Activated CD4-positive, alpha-beta memory T cell treated with anti-CD3 and anti-CD28 coated beads for 36 hours (primary cell): ENCODE measurements at regions of chr7 and their contacts with region 1.

Region 1: GRCh38 chr7:23696916-23697441 is 13.0 kb upstream of the STK31 start:
- DNase-seq: peak; percentile 70
- H3K4me3 Mint-ChIP-seq: no peak overlapping the region
- H3K27ac Mint-ChIP-seq: no peak overlapping the region
- H3K4me1 Mint-ChIP-seq: no peaks in the 10 kb centered on the region
- H3K27me3 Mint-ChIP-seq: no peaks in the 10 kb centered on the region

Region 2: DNA sequence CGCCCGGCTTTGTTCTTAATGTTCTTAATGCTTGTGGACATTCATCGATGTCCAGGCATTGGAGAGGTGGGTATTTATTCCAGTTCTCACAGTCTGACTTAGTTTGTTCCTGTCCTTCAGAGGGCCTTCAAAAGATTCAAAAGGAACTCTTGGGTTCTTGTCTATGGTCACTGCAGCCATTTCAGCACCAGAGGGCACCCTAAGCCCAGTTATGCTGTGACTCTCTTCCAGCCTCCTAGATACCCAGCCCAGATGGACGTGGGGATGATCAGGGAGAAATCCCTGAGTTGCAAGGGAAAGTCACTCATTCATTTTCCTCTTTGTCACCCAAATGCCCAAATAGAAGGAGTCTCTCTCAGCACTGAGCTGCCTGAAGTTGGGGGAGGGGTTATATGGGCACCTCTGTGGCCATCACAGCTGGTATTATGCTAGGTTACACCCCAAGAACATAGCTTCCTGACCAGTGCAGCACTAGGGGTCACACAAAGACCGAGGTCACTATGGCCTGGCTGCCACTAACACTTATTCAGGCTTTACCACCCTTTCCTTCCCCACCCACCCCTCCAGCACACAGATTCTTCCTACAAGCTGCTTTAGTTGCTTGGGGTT is 126.3 kb before region 1 on chr7:
- CTCF ChIA-PET with region 1: interaction called, 48 read pairs
- POLR2A ChIA-PET with region 1: no interaction called
- intact Hi-C with region 1: no loop called
- DNase-seq: peak; percentile 82
- H3K4me3 Mint-ChIP-seq: no peak overlapping the region
- H3K27ac Mint-ChIP-seq: no peak overlapping the region
- H3K4me1 Mint-ChIP-seq: no peaks in the 10 kb centered on the region
- H3K27me3 Mint-ChIP-seq: peaks cover 8% of the 10 kb centered on the region

Region 3: GRCh38 chr7:23679898-23680413 is 17.0 kb before region 1 on chr7 and contains the start of gene FAM221A:
- CTCF ChIA-PET with region 1: interaction called, 18 read pairs
- POLR2A ChIA-PET with region 1: no interaction called
- intact Hi-C with region 1: no loop called
- DNase-seq: peak; percentile 90
- H3K4me3 Mint-ChIP-seq: peak within 1 kb of the TSS; percentile 84
- H3K27ac Mint-ChIP-seq: peak within 1 kb of the TSS; percentile 73
- H3K4me1 Mint-ChIP-seq: peaks cover 9% of the 10 kb centered on the region
- H3K27me3 Mint-ChIP-seq: peaks cover 5% of the 10 kb centered on the region
- total RNA-seq, gene FAM221A: 9.0 to 10.7 TPM

Region 4: DNA sequence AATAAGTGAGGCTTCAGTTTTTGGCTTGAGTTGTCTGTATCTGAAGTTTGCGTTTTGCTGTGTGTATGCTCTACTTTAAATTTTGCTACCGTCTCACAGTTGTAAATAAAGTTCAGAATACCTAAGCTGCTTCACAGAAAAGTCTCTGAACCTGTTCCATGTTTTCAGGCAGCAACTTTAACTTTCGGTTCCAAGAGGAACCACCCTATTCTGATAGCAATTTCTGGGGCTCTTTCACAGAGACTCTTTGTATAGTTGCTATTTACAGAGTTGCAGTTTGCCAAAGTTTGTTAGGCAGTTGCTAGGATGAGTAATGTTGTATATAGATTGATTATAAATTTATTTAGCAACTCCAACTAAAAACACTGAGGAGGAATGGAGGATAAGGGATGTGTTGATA is 11.2 kb before region 1 on chr7:
- CTCF ChIA-PET with region 1: interaction called, 18 read pairs
- POLR2A ChIA-PET with region 1: no interaction called
- intact Hi-C with region 1: no loop called
- DNase-seq: no peak
- H3K4me3 Mint-ChIP-seq: no peak overlapping the region
- H3K27ac Mint-ChIP-seq: no peak overlapping the region
- H3K4me1 Mint-ChIP-seq: peaks cover 5% of the 10 kb centered on the region
- H3K27me3 Mint-ChIP-seq: no peaks in the 10 kb centered on the region

Region 5: DNA sequence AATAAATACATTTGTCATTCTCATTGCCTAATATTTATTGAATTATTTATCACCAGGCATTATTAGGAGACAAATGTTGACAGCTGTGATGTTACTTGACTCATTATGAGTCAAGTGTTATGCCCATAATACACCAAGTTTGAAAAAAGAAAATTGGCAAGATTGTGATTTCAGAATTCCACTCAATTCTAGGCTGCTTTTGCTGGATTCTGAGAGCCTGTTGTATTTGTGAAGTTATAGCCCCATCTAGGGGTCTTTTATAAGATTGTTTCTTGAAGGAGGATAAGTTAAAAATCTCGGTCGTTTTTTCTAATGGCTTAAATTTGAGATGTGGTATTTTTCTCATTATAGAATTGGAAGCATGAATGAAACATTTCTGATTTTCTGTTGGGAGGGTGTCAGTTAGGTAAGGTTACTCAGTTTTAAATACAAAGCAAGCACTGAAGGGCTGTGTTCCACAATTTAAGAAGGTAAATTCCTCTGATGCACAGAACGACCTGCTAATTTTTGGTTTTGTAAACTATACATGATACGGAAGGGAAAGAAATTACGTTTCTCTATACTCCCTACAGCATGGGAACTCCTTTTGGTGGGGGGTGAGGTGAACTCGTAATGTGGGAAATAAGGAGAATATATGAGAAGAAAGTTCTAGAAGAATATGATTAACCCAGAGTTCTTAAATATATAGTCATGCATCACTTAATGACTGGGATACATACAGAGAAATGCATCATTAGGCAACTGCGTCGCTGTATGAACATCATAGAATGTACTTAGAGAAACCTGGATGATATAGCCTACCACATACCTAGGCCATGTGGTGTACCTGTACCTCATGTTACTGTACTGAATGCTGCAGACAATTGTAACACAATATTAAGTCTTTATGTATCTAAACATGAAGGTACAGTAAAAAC is 15.6 kb after region 1 on chr7:
- CTCF ChIA-PET with region 1: interaction called, 15 read pairs
- POLR2A ChIA-PET with region 1: no interaction called
- intact Hi-C with region 1: no loop called
- DNase-seq: no peak
- H3K4me3 Mint-ChIP-seq: no peak overlapping the region
- H3K27ac Mint-ChIP-seq: peak overlapping the region; percentile 5
- H3K4me1 Mint-ChIP-seq: no peaks in the 10 kb centered on the region
- H3K27me3 Mint-ChIP-seq: peaks cover 2% of the 10 kb centered on the region

Region 6: DNA sequence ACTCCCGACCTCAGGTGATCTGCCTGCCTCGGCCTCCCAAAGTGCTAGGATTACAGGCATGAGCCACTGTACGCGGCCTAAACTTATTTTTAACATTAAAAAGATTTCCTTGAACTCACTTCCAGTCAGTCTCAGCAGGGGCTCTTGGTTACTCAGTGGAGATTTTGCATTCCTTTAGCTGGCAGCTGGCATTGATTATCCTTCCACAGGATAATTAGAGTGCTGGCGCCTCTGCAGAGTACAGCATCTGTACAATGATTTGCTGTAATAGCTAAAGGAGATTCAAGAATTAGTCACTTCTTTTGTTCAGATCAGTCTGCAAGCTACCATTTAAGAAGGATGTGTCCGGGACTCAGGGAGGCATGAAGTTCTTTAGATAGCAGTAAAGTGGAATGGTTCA is 462.0 kb after region 1 on chr7:
- CTCF ChIA-PET with region 1: no interaction called
- POLR2A ChIA-PET with region 1: no interaction called
- intact Hi-C with region 1: no loop called
- DNase-seq: no peak
- H3K4me3 Mint-ChIP-seq: no peak overlapping the region
- H3K27ac Mint-ChIP-seq: no peak overlapping the region
- H3K4me1 Mint-ChIP-seq: no peaks in the 10 kb centered on the region
- H3K27me3 Mint-ChIP-seq: no peaks in the 10 kb centered on the region